ENCODE measurements at regions of chr17 and their contacts with region 1.

Region 1: DNA sequence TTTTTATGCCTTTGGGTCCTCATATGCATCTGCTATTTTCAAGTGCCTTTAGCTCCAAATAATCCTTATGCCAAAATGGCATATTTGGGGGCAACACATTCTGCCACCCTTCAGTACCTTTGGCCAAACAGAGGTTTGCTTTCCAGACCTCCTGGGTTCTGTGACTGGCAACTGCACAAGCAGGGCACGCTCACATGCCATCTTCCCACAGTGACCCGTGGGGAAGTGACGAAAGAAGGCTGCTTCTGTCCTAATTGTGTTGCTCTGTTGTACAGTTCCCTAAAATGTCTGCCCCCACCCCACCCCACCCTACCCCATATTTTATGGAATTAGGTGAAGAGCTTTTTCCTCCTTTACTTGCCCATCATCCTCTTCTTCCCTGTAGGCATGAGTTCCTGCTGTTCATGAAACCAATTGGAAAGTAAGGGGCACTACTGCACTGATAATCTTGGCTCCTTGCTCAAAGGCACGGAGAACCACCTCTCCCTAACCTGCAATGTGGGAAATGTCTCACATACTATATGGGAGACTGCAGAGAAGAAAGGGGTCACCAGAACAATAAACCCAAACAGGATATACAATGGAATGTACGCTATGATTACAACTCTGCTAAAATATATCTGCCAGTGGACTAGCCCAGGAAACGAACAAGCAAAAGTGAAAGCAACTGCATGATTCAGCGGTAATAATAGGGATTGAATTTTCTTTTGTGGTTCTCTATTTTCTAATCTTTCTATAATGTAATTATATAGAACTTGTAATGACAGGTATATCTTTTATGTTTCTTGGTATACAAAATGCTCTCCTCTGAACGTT is 3.3 kb upstream of the SLFN12L start:
- DNase-seq: peak; percentile 85
- H3K4me3 ChIP-seq: peak overlapping the region in 2 of 3 experiments; percentile 1 to 38
- H3K27ac ChIP-seq: peak overlapping the region; percentile 52
- H3K4me1 ChIP-seq: peaks cover 44% of the 10 kb centered on the region
- H3K27me3 ChIP-seq: no peaks in the 10 kb centered on the region
- CTCF ChIP-seq: no peak
- POLR2A ChIP-seq: peak; percentile 31

Region 2: DNA sequence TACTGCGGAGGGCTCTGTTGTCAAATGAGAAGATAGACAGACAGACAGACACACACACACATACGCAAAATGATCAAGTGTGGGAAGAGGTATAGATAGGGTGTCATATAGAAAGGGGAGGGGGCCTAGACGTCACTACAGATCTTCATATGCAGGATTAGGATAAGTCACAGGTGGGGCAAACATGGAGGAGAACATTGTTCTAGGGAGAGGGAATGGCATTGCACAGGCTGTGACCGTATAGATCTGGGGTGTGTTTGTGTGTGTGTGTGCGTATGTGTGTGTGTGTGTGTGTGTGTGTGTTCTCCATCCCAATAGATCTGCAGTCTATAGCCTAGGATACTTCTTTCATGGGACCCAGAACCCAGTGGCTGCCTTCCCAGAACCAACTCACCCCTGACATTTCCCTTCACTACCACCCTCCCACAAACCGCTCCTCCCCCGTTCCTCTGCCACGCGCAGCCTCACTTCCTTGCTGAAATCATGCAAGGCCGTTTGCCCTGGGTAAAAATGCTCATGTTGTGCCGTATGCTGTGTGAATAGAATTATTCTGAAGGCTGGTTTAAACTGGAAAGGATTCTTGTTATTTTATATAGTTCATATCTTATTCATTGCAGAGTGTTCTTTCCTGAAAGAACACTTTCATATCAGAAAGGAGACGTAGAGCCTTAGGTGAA is 1127.2 kb before region 1 on chr17:
- CTCF ChIA-PET with region 1: no interaction called
- POLR2A ChIA-PET with region 1: no interaction called
- dilution Hi-C with region 1: no loop called
- intact Hi-C with region 1: loop called (anchors 10 kb)
- DNase-seq: no peak
- H3K4me3 ChIP-seq: no peak overlapping the region
- H3K27ac ChIP-seq: peak overlapping the region; percentile 73
- H3K4me1 ChIP-seq: peaks cover 14% of the 10 kb centered on the region
- H3K27me3 ChIP-seq: peaks cover 0 to 6% of the 10 kb centered on the region in 2 experiments
- CTCF ChIP-seq: no peak
- POLR2A ChIP-seq: no peak

Region 3: GRCh38 chr17:35164716-35165115 is 376.1 kb before region 1 on chr17:
- CTCF ChIA-PET with region 1: interaction called, 186 read pairs
- POLR2A ChIA-PET with region 1: no interaction called
- dilution Hi-C with region 1: no loop called
- intact Hi-C with region 1: no loop called
- DNase-seq: no peak
- H3K4me3 ChIP-seq: no peak overlapping the region
- H3K27ac ChIP-seq: no peak overlapping the region
- H3K4me1 ChIP-seq: no peaks in the 10 kb centered on the region
- H3K27me3 ChIP-seq: peaks cover 2 to 7% of the 10 kb centered on the region in 2 experiments
- CTCF ChIP-seq: no peak
- POLR2A ChIP-seq: no peak

Region 4: DNA sequence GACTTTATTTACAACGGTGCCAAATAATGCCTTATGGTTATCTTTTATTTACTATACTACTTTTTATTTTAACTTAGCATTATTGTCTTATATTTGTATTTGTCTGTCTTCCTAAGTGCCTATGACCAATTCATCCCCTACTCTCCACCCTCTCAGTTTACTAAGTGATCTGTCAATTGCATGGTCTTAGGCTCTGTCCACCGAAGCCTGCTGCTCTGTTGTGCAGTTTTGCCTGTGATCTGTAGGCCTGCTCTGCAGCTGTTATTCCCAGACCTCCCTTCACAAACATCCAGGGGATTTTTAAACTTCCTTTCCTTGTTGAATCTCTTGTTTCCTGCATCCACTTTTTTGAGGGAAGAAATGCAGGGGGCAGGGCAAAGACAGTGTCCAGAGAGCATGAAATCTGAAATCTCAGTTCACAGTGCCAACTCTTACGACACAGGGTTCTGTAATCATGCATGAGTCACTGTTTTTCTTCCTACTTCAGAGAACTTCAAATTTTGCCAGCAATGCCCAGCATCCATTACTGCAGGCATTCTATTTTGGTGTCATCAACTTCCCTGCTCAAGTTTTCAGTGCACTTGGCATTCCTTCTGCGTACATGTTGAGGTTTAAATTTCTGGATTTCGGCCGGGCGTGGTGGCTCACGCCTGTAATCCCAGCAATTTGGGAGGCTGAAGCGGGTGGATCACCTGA is 286.5 kb before region 1 on chr17:
- CTCF ChIA-PET with region 1: interaction called, 8 read pairs
- POLR2A ChIA-PET with region 1: no interaction called
- dilution Hi-C with region 1: no loop called
- intact Hi-C with region 1: loop called (anchors 2 kb)
- DNase-seq: peak; percentile 98
- H3K4me3 ChIP-seq: no peak overlapping the region
- H3K27ac ChIP-seq: peak overlapping the region; percentile 59
- H3K4me1 ChIP-seq: peaks cover 35% of the 10 kb centered on the region
- H3K27me3 ChIP-seq: no peaks in the 10 kb centered on the region
- CTCF ChIP-seq: no peak
- POLR2A ChIP-seq: no peak

Region 5: GRCh38 chr17:35432176-35433074 is 108.4 kb before region 1 on chr17 and contains the start of gene SLFN12:
- CTCF ChIA-PET with region 1: interaction called, 11 read pairs
- POLR2A ChIA-PET with region 1: no interaction called
- dilution Hi-C with region 1: no loop called
- intact Hi-C with region 1: loop called (anchors 1 kb)
- DNase-seq: peak; percentile 96
- H3K4me3 ChIP-seq: peak within 1 kb of the TSS; percentile 55 to 92 (median 82)
- H3K27ac ChIP-seq: peak within 1 kb of the TSS; percentile 96
- H3K4me1 ChIP-seq: peaks cover 23% of the 10 kb centered on the region
- H3K27me3 ChIP-seq: no peaks in the 10 kb centered on the region
- CTCF ChIP-seq: no peak
- POLR2A ChIP-seq: peak; percentile 92
- total RNA-seq, gene SLFN12: 29.9 and 42.6 TPM in 2 replicates

Region 6: GRCh38 chr17:35578197-35578928 is 37.6 kb after region 1 on chr17 and contains the start of gene PEX12:
- CTCF ChIA-PET with region 1: interaction called, 13 read pairs
- POLR2A ChIA-PET with region 1: no interaction called
- dilution Hi-C with region 1: no loop called
- intact Hi-C with region 1: loop called (anchors 1 kb)
- DNase-seq: peak; percentile 83
- H3K4me3 ChIP-seq: peak within 1 kb of the TSS; percentile 60 to 77 (median 64)
- H3K27ac ChIP-seq: peak within 1 kb of the TSS; percentile 38
- H3K4me1 ChIP-seq: peaks cover 12% of the 10 kb centered on the region
- H3K27me3 ChIP-seq: no peaks in the 10 kb centered on the region
- CTCF ChIP-seq: no peak
- POLR2A ChIP-seq: peak; percentile 94
- total RNA-seq, gene PEX12: 2.8 and 3.4 TPM in 2 replicates

Region 7: GRCh38 chr17:35666967-35667532 is 126.3 kb after region 1 on chr17:
- CTCF ChIA-PET with region 1: no interaction called
- POLR2A ChIA-PET with region 1: no interaction called
- dilution Hi-C with region 1: no loop called
- intact Hi-C with region 1: no loop called
- DNase-seq: peak; percentile 3
- H3K4me3 ChIP-seq: no peak overlapping the region
- H3K27ac ChIP-seq: no peak overlapping the region
- H3K4me1 ChIP-seq: no peaks in the 10 kb centered on the region
- H3K27me3 ChIP-seq: no peaks in the 10 kb centered on the region
- CTCF ChIP-seq: no peak
- POLR2A ChIP-seq: no peak

Region 8: DNA sequence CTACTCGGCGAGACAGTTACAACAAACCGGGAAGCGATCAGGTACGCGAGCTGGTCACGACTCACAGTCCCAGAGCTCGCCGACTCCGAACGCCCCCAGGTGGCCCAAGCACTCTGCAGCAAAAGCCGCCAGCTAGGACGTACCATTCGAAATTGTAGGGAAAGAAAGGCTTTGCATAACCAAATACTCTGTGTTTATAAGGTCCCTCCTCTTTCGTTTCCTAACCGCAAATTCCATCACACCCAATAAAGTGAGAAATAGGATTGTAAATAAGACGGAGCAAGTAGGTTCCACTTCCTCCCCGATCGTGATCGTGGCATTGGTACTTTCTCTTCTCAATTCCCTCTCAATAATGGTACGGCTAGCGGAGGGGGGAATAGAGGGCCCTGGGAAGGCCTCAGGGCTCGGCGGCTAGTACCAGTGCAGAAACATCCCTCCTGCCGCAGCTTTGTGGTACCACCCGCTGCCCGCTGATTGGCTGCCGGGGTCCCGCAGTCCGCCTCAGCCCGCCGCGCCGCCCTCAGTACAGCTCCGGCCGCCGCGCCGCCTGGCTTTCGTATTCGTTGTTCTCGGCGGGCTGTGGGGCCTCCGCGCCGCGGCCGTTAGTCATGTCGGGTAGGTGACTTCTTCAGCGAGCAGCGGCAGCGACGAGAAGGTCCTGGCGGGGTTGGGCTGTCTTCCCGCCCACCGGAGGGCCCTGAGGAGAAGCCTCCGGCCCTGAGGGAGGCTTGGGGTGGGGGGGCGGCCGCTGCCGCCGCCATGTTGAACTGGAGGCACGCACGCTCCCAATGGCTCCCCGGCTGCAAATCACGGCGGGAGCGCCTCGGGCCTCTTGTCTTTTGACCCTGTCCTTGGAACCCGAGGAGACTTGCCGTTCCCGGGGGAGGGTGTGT is 268.4 kb after region 1 on chr17 and contains the start of gene TAF15:
- CTCF ChIA-PET with region 1: no interaction called
- POLR2A ChIA-PET with region 1: no interaction called
- dilution Hi-C with region 1: no loop called
- intact Hi-C with region 1: loop called (anchors 2 kb)
- DNase-seq: peak; percentile 98
- H3K4me3 ChIP-seq: peak within 1 kb of the TSS; percentile 56 to 96 (median 81)
- H3K27ac ChIP-seq: peak within 1 kb of the TSS; percentile 90
- H3K4me1 ChIP-seq: peaks cover 35% of the 10 kb centered on the region
- H3K27me3 ChIP-seq: no peaks in the 10 kb centered on the region
- CTCF ChIP-seq: peak; percentile 77 to 85
- POLR2A ChIP-seq: peak; percentile 98
- total RNA-seq, gene TAF15: 244 and 247 TPM in 2 replicates